Left cardiac atrium (tissue), 4 donors: ENCODE measurements at regions of chr12 and their contacts with region 1.

Region 1: GRCh38 chr12:569803-570434 is 93.3 kb downstream of the NINJ2 start:
- DNase-seq: peak; percentile 93
- ATAC-seq: peak; percentile 76 to 79

Region 2: DNA sequence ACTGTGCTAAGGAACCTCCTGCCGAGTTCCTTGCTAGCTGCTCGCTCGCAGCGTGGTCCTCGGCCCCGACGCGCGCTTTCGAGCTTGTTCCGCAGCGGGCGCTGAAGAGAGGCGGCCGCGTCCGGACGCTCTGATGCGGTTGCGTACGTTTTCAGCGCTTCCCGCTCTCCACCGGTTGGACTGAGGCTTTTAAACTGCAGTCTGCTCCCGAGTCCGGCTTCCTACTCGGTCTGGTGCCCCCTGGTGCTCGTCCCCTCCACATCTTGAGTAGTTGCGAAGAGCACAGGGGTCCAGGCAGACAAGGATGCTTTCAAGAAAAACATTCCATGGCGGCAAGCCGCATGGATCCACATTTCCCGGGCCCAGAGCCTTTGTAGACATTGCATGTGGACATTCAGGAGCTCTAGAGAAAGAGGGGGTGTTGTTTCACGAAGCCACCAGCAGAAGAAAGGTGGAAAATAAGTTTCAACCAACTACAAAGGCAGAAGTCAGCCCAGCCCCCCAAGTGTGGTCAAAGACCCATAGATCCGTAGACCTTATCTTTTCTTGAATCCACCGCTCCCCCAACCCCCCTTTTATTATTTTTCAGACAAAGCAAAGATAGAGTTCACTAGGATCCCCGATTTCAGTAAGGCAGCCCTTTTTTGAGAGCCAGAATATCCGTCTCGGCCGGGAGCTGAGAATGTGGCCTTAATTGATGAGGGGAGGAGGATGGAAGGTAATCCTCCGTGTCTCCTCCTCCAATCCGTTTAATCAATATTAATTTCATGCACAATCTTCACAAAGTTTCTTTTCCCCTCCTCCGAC is 181.5 kb after region 1 on chr12:
- intact Hi-C with region 1: loop called (anchors 1 to 10 kb)
- DNase-seq: peak; percentile 96
- ATAC-seq: peak; percentile 56 to 73

Region 3: GRCh38 chr12:818733-819132 is 248.8 kb after region 1 on chr12:
- intact Hi-C with region 1: loop called (anchors 5 to 10 kb)
- DNase-seq: no peak
- ATAC-seq: no peak

Region 4: DNA sequence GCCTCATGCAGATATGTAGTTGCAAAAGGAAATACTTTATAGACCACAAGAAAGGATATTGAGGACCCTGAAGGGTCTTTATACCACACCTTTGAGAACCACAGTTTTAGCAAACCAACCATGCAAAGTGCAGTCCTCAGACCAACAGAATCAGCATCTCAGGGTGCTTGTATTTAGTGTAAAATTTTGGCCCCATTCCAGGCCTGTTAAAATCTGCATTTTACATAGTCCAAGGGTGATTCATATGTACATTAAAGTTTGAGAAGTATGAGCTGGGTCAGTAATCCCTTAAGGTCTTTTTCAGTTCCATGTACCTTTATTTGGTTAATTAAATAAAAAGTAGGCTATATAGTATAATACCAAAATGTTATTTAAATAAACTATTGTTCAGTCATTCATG is 273.7 kb after region 1 on chr12:
- intact Hi-C with region 1: no loop called
- DNase-seq: no peak
- ATAC-seq: no peak

Region 5: GRCh38 chr12:913919-914708 is 344.2 kb after region 1 on chr12:
- intact Hi-C with region 1: no loop called
- DNase-seq: no peak
- ATAC-seq: no peak

Region 6: DNA sequence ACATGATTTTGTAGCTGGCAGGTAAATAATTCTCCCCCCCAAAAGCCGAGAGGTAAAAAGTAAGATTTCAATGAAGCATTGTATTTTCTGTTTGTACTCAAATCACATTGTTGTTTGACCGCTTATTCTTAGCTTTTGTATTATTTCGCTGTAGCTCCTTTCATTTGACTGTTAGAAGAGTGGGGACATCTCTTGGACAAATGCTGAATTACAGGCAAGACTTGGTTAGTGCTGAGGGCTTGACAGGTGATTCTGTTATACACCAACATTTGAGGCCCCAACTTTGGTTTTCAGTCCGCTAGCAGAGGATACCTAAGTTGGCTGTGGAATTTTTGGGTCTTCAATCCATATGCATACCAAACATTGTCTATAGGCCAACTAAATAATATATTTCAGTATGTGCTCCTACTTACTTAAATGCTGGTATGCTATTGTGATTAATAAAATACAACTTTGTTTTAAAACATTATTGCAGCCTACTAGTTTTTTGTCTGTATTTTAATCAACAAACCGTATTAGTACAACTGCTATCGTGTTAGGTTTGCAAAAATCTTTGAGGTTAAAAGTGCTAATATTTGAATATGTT is 523.3 kb after region 1 on chr12:
- intact Hi-C with region 1: loop called in 1 of 2 experiments (anchors 5 kb)
- DNase-seq: no peak
- ATAC-seq: peak; percentile 41